ENCODE measurements at regions of chr10 and their contacts with region 1.

Region 1: DNA sequence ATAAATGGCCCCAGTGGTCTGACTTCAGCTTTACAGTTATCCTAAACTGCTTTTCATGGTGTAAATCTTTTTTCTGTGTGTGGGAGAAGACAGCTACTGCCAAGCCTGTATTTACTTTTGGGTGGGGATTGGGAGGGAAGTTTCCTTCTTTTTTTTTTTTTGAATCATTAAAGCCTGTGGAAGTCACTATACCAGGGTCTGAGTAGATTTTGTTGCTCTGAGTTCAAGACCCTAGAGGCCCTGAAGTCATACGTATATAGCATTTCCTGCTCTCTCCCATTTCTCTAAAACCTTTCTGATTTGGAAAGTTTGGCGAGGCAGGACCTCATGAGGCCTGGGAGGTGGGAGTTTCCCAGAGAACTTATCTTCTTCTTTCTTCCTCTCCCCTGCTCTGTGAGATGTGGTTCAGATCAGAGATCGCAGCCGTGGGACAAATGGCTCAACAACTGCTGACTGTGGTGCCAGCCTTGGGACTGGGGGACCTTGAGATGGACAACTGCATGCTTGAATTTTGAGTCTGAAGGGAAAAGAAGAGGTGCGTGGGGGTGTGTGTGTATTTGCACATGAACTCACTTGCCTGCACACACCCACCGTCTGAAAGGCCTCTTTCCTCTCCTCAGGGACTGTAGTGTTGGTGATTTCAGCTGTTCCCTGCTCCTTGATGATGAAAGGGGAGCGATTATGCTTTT is 18.1 kb downstream of the LRMDA start:
- DNase-seq: no peak
- ATAC-seq: peak; percentile 29
- H3K4me3 ChIP-seq: no peak overlapping the region
- H3K27ac ChIP-seq: no peak overlapping the region
- H3K4me1 ChIP-seq: peaks cover 28% of the 10 kb centered on the region
- H3K27me3 ChIP-seq: peaks cover 21% of the 10 kb centered on the region
- CTCF ChIP-seq: no peak

Region 2: GRCh38 chr10:75395066-75395931 is 54.2 kb before region 1 on chr10:
- CTCF ChIA-PET with region 1: interaction called, 15 read pairs
- POLR2A ChIA-PET with region 1: no interaction called
- intact Hi-C with region 1: no loop called
- DNase-seq: peak; percentile 93
- ATAC-seq: peak; percentile 14
- H3K4me3 ChIP-seq: peak overlapping the region; percentile 79
- H3K27ac ChIP-seq: peak overlapping the region; percentile 45
- H3K4me1 ChIP-seq: peaks cover 6% of the 10 kb centered on the region; the same call in 1 of the 2 replicates
- H3K27me3 ChIP-seq: peaks cover 61% of the 10 kb centered on the region
- CTCF ChIP-seq: peak; percentile 100

Region 3: GRCh38 chr10:75696536-75696935 is 247.0 kb after region 1 on chr10:
- CTCF ChIA-PET with region 1: interaction called, 11 read pairs
- POLR2A ChIA-PET with region 1: no interaction called
- intact Hi-C with region 1: no loop called
- DNase-seq: no peak
- ATAC-seq: no peak
- H3K4me3 ChIP-seq: no peak overlapping the region
- H3K27ac ChIP-seq: no peak overlapping the region
- H3K4me1 ChIP-seq: no peaks in the 10 kb centered on the region
- H3K27me3 ChIP-seq: peaks cover 36% of the 10 kb centered on the region
- CTCF ChIP-seq: no peak

Region 4: DNA sequence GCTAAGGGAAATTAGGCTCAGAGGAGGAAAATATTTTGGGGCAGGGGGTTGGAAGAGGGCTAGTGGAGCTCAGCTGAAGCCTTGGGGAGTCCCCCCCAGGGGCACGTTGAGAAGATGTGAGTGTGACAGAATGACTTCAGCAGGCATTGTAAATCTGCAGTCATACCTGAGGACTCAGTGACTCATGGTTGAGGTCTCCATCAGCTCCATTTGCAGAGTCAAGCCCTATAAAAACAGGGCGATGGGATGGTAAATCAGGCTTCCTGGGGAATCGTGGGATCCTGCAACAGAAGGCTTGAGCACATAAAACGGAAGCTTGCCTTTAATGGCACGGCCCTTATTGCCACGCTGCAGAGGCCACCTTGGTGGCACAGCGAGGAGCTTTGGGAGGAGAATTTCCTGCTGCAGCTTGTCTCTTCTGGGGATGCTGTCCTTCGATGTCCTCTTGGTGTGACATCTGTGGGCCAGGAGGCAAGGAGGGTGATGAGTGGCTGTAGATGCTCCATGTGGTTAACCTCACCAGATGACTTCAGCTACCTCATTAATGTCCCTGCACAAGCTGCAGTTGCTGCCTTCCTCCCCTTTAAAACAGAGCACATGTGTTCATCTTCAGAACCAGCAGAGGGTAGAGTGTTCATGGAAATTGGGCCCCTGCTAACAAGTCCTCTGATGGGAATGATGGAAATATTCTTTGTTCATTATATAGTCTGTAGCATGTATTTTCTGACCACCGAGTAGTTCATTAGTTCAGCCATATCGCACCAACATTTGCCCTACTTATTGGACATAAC is 267.8 kb after region 1 on chr10:
- CTCF ChIA-PET with region 1: interaction called, 10 read pairs
- POLR2A ChIA-PET with region 1: no interaction called
- intact Hi-C with region 1: no loop called
- DNase-seq: peak; percentile 74
- ATAC-seq: peak; percentile 76
- H3K4me3 ChIP-seq: no peak overlapping the region
- H3K27ac ChIP-seq: no peak overlapping the region
- H3K4me1 ChIP-seq: peaks cover 7% of the 10 kb centered on the region; the same call in 1 of the 2 replicates
- H3K27me3 ChIP-seq: peaks cover 44% of the 10 kb centered on the region
- CTCF ChIP-seq: peak; percentile 47; the same call in 1 of the 2 replicates

Measured in PC-3 (cell line).